ENCODE measurements at regions of chr5 and their contacts with region 1.

Region 1: DNA sequence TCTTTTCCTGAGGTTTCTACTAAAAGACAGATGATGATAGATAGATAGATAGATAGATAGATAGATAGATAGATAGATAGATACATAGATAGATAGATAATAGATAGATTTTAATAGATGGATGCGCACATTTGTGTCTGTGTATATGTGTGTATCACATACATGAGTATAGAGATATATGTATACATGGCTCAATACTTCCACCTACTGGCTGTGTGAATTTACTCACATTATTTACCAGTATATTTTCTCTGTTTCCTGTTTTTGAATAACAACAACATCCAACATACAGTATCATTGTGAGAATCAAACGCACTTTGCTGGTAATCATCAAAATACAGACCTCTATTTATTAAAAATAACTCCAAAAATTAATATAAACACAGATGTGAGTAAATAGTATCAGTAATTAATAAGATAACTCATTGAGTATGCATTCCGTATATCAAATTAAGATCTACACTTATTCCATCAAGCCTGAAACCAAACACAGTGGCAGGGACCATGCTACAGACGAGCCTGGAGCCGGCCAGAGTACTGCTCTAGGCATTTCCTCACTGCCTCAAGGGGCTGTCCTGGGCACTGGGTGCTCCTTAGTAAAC is 338.0 kb downstream of the SEMA5A start:
- DNase-seq: peak; percentile 3
- ATAC-seq: no peak
- H3K4me3 ChIP-seq: no peak overlapping the region
- H3K27ac ChIP-seq: no peak overlapping the region
- H3K4me1 ChIP-seq: no peaks in the 10 kb centered on the region
- H3K27me3 ChIP-seq: no peaks in the 10 kb centered on the region
- CTCF ChIP-seq: peak; percentile 5 to 45 (median 17); a peak in 3 of 6 replicates
- POLR2A ChIP-seq: no peak
- RAD21 ChIP-seq: peak; percentile 40; the same call in 1 of the 2 replicates

Region 2: GRCh38 chr5:7886849-7887475 is 1321.0 kb before region 1 on chr5:
- CTCF ChIA-PET with region 1: no interaction called
- POLR2A ChIA-PET with region 1: no interaction called
- RAD21 ChIA-PET with region 1: no interaction called
- intact Hi-C with region 1: loop called (anchors 2 kb)
- DNase-seq: peak; percentile 19
- ATAC-seq: peak; percentile 46; the same call in 1 of the 2 replicates
- H3K4me3 ChIP-seq: no peak overlapping the region
- H3K27ac ChIP-seq: no peak overlapping the region
- H3K4me1 ChIP-seq: no peaks in the 10 kb centered on the region
- H3K27me3 ChIP-seq: no peaks in the 10 kb centered on the region
- CTCF ChIP-seq: peak in 2 of 3 experiments; percentile 21 to 62; a peak in 3 of 6 replicates
- POLR2A ChIP-seq: no peak
- RAD21 ChIP-seq: peak; percentile 48

Region 3: DNA sequence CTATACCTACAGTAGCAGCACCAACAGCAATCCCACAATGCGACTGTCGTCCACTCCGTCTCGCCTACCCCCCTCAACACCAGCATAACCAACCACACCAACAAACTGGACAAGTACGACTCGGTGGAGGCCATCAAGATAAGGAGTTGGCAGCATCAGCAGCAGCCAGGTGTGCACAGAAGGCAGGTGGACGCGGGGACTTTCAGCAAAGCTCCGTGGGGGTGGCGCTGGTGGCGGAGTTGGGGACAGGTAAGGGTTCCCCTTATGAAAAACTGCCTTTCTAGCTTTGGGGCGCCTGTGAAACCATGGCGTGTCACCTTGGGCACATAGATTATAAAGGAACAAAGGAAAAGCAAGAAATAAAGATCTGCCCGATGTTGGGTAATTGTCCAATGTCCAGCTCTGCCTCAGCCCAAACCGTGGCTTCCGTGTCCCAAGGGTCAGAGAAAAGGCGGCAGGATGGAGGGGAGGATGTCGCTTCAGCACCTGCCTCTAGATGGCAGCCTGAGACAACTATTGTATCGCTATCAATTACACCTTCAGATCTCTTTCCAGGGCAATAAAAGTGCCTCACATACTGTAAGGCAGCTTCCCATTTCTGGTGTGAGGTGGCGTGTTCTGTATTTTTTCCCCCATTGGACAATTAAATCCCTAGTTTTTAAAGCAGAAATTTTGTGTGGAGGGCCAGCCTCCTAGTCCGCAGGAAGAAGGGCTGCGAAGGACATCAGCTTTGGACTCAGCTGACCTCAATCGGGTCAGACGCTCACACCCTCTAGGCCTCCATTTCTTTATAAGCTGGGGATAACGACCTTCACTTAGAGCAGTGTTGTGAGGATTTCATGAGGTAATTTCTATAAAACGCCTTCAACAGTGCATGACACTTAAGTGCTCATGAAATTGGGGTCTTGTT is 1280.2 kb before region 1 on chr5:
- CTCF ChIA-PET with region 1: interaction called, 3 read pairs
- POLR2A ChIA-PET with region 1: no interaction called
- RAD21 ChIA-PET with region 1: no interaction called
- intact Hi-C with region 1: loop called (anchors 1 kb)
- DNase-seq: peak; percentile 22
- ATAC-seq: peak; percentile 95
- H3K4me3 ChIP-seq: no peak overlapping the region
- H3K27ac ChIP-seq: no peak overlapping the region
- H3K4me1 ChIP-seq: no peaks in the 10 kb centered on the region
- H3K27me3 ChIP-seq: peaks cover 7% of the 10 kb centered on the region; the same call in 1 of the 2 replicates
- CTCF ChIP-seq: peak; percentile 20 to 80 (median 73); a peak in 5 of 6 replicates
- POLR2A ChIP-seq: no peak
- RAD21 ChIP-seq: peak; percentile 72